Astrocyte of the cerebellum (primary cell): ENCODE measurements at regions of chr21 and their contacts with region 1.

Region 1: GRCh38 chr21:36163750-36164741 is 7.4 kb downstream of the DOP1B start:
- DNase-seq: no peak
- H3K4me3 ChIP-seq: no peak overlapping the region
- CTCF ChIP-seq: no peak

Region 2: DNA sequence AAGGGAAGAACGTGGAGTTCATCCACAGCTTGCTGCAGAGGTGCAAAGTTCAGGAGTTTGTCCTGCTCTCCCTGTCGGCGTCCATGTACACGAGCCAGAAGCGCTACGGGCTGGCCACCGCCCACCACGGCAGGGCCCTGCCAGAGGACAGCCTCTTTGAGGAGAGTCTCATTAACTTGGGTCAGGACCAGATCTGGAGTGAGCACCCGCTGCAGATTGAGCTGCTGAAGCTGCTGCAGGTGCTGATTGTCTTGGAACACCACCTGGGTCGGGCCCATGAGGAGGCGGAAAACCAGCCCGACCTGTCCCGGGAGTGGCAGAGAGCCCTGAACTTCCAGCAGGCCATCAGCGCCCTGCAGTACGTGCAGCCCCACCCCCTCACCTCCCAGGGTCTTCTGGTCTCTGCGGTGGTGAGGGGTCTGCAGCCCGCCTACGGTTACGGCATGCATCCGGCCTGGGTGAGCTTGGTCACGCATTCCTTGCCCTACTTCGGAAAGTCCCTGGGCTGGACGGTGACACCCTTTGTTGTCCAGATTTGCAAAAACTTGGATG is 82.1 kb after region 1 on chr21:
- in situ Hi-C with region 1: loop called (anchors 5 kb)
- DNase-seq: no peak
- H3K4me3 ChIP-seq: no peak overlapping the region
- CTCF ChIP-seq: no peak